ENCODE measurements at regions of chr12 and their contacts with region 1.

Region 1: GRCh38 chr12:87848248-87848868 is 180.8 kb downstream of the C12orf50 start:
- DNase-seq: no peak
- ATAC-seq: peak; percentile 35 to 41

Region 2: DNA sequence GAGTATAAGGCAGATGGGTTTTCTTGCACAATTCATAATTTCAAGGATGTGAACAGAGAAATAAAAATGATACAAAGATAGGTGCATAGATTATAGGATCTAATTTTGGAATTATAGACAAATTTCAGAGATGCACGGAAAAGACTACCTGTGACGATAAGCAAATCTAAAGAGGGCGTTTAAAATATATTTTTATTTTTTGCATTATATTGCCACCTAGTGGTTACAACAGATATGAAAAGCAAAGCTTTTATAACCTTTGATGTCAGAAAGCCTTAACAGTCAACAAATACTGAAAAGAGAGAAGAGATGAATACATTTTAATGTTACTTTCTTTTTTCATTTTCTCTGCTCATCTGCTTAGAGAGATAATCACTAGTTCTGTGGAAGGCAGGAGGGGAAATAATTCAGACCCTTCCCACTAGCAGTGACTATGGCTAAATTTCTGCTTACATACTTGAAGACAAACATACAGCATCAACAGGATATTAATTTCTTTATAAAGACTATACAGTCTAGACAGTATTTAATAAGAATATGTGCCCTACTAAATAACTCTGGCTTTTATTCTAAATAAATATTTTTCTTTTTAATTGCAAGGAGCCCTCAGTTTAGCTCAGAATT is 1927.9 kb before region 1 on chr12:
- intact Hi-C with region 1: loop called in 1 of 2 experiments (anchors 10 kb)
- DNase-seq: no peak
- ATAC-seq: no peak

Region 3: DNA sequence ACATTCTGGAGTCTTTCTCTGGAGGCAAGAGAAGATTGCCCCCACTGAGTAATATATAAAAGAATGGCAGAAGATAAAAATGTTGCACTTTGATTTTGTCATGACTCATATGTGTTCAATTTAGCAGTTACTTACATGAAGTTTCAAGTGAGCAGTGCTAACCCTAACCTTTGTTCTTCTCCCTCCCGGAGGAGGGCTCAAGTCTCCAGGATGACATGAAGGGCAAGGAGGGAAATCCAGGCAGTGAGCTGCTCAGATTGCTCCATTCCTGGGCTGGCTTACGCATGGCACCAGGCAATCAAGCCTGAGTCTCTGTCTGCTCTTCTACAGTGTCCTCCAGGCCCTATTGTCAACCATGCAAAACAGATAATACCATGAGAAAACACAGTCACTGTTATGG is 1181.6 kb after region 1 on chr12:
- intact Hi-C with region 1: no loop called
- DNase-seq: no peak
- ATAC-seq: no peak

Measured in left cardiac atrium (tissue), 4 donors.